Heart left ventricle (tissue), 16 donors: ENCODE measurements at regions of chr4 and their contacts with region 1.

Region 1: DNA sequence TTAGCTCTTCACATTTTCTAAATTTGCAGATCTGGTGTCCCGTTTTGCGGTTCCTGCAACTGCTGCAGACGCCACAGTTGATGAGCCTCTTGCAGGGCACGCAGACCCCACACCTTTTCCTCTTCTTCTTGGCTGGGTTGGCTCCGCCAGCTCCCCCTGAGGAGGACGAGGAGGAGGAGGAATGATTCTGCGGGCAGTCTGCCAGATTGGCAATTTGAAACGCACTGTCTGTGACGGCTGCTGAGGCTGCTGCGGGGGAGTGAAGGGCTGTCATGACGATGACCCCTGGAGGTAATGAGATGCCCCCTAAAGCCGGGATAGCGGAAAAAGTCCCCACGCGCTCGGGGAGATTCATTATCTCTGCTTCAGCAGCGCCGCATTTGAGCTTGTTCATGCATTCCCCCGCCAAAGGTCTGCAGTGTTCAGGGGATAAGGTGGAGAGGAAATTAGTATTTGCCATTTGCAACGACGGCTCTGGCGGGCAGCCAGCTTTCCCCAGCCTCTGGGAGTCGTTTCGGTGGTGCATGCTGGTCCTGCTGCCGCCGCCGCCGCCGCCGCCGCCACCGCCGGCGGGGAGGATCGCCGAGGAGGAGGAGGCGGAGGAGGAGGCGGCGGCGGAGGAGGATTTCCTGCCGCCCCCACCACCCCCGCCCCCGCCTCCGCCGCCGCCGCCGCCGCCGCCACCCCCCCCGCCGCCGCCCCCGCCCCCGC is 3.8 kb downstream of the CXXC4 start:
- DNase-seq: peak; percentile 77 to 86 (median 83)
- ATAC-seq: peak; percentile 16 to 65 (median 36)
- H3K4me3 ChIP-seq: peak overlapping the region; percentile 41 to 78 (median 63)
- H3K27ac ChIP-seq: peak overlapping the region in 11 of 12 donors; percentile 25 to 89 (median 83)
- H3K4me1 ChIP-seq: peaks cover 0 to 33% (median 11%) of the 10 kb centered on the region in 12 donors
- H3K27me3 ChIP-seq: peaks cover 0 to 50% (median 0%) of the 10 kb centered on the region in 9 donors
- CTCF ChIP-seq: no peak
- POLR2A ChIP-seq: no peak

Region 2: GRCh38 chr4:104735174-104735573 is 244.2 kb after region 1 on chr4:
- intact Hi-C with region 1: loop called in 2 of 10 experiments (anchors 10 kb)
- DNase-seq: no peak
- ATAC-seq: peak; percentile 51 to 72 (median 69)
- H3K4me3 ChIP-seq: no peak overlapping the region
- H3K27ac ChIP-seq: peak overlapping the region in 7 of 12 donors; percentile 3 to 70 (median 39)
- H3K4me1 ChIP-seq: peaks cover 0 to 23% (median 7%) of the 10 kb centered on the region in 12 donors
- H3K27me3 ChIP-seq: no peaks in the 10 kb centered on the region
- CTCF ChIP-seq: peak in 1 of 12 donors; percentile 4
- POLR2A ChIP-seq: no peak

Region 3: DNA sequence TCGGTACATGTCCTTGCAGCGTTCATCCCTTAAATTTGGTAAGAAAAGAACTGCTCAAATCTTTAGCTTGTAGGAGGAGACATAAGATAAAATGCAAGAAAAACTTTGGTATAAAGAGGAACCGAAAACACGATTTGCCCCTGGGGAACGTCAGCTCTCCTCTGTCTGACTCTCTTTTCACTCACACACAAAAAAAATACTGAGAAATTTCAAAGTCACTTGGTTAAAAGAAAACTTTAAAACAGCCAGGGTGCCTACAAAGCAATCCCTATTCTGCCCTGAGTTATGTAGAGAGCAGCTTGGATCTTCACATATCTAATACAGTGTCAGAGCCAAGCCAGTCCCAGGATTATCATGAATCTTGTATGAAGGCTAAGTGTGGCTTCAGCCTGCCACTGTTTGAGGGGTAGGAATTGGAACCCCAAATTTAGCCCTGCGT is 252.3 kb after region 1 on chr4:
- intact Hi-C with region 1: loop called in 2 of 10 experiments (anchors 10 kb)
- DNase-seq: no peak
- ATAC-seq: peak in 1 of 4 donors; percentile 61
- H3K4me3 ChIP-seq: no peak overlapping the region
- H3K27ac ChIP-seq: peak overlapping the region in 3 of 12 donors; percentile 7 to 14 (median 13)
- H3K4me1 ChIP-seq: peaks cover 0 to 9% (median 0%) of the 10 kb centered on the region in 12 donors
- H3K27me3 ChIP-seq: no peaks in the 10 kb centered on the region
- CTCF ChIP-seq: no peak
- POLR2A ChIP-seq: no peak

Region 4: DNA sequence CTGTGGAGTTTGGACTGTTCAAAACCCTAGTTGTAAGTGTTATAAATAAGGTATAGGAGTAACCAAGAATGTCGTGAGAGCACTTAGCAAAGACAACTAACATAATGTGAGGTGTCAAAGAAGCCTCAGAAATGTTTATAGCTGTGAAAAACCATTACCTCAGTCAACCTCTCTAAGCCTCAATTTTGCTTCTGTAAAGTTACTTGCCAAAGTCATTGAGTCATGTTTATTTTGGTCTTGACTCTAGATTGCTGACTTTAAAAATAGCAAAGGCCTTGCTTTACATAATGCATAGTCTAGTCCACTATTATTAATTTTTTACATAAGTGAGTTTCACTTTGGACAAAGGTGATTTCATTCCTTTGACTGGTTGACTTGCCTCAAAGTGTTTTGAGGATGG is 261.4 kb after region 1 on chr4:
- intact Hi-C with region 1: loop called in 2 of 10 experiments (anchors 10 kb)
- DNase-seq: no peak
- ATAC-seq: peak; percentile 84 to 92 (median 89)
- H3K4me3 ChIP-seq: no peak overlapping the region
- H3K27ac ChIP-seq: peak overlapping the region in 8 of 12 donors; percentile 4 to 73 (median 50)
- H3K4me1 ChIP-seq: peaks cover 0 to 9% (median 0%) of the 10 kb centered on the region in 12 donors
- H3K27me3 ChIP-seq: no peaks in the 10 kb centered on the region
- CTCF ChIP-seq: no peak
- POLR2A ChIP-seq: no peak